ENCODE measurements at regions of chr11 and their contacts with region 1.

Region 1: DNA sequence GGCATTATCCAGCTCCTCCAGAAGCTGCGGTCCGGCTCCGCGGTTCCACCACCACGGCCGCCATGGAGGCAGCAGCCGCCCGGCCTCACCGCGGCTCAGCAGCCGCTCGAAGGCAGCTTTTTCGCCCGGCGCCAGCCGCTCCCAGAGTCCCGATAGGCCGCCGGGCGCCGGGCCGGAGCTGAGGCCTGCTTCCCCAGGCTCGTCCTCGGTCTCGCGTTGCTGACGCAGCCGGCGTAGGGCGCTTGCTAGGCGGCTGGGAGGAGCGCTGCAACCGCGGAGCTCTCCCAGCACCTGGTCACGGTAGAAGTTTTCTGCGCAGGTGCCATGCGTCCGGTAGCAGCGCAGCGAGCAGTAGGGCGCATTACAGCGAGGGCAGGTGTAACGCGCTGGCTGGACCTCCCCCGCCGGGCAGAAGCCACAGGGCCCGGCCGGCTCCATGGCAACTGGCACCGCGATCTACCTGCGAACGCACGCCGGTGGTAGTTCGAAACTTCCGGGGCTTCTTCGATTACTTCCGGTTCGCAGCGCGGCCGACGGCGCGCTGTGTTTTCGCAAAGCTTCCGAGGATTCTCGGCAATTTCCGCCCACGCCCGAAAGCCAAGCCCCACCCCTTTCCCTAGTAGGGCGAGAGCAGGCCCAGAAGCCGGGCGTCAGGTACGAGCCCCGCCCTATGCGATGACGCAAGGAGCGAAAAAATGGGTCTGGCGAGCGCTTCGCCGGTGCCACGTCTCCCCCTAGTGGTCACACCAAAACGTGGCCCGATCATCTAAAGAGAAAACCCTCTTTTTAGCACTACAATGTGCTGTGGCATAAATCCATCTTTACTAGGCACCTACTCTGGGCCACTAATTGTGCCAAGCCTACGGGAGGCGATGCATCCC is at the start of gene ZNHIT2:
- DNase-seq: peak; percentile 99 to 100 (median 99)
- ATAC-seq: peak; percentile 82 to 89 (median 86)
- H3K4me3 ChIP-seq: peak within 1 kb of the TSS; percentile 67 to 99 (median 88)
- H3K27ac ChIP-seq: peak within 1 kb of the TSS; percentile 71 to 93 (median 84)
- H3K4me1 ChIP-seq: peaks cover 0 to 63% (median 40%) of the 10 kb centered on the region in 12 donors
- H3K27me3 ChIP-seq: peaks cover 0 to 5% (median 0%) of the 10 kb centered on the region in 9 donors
- CTCF ChIP-seq: peak; percentile 91 to 99 (median 96)
- POLR2A ChIP-seq: peak in 1 of 2 donors; percentile 55
- total RNA-seq, gene ZNHIT2: 5.5 to 14.3 (median 7.3) TPM

Region 2: DNA sequence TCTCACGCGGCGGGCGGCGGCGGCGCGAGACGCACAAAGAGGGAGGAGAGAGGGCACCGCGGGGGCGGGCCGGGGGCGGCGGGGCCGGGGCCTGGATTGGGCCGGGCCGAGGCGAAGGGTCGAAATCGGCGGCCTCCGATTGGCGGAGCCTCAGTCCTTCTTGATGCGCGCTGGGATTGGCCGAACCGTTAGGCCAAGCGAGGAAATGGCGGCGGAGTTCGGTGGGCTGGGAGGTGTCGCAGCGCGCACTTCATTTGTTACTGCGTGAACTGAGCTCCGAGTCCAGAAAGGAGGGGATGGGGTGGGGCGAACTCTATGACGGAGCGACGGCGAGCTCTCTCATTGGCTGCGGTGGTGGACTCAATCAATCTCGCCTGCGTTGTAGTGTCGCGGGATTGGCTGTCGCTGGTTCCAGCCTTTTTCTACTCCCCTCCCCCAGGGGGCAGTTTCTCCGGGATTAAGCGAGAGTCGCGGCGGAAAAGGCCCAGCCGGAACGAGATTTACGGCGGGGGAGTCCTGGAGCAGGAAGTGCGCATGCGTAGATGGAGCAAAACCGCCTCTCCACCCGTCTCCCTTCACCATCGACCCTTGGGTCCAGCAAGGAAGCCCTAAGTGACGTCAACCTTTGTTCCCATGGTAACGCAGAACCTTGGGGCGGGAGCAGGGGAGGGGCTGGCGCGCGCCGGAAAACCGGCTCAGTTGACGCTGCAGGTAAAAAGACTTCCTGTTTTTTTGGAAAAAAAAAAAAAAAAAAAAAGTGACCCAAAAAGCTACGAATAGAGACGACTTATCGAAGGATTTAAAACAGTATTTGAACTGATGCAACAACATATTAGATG is 338.7 kb before region 1 on chr11 and contains the start of gene SF1:
- intact Hi-C with region 1: loop called in 1 of 10 experiments (anchors 10 kb)
- DNase-seq: peak; percentile 98 to 100 (median 99)
- ATAC-seq: peak; percentile 93 to 97 (median 96)
- H3K4me3 ChIP-seq: peak within 1 kb of the TSS; percentile 77 to 99 (median 92)
- H3K27ac ChIP-seq: peak within 1 kb of the TSS; percentile 98 to 100 (median 99)
- H3K4me1 ChIP-seq: peaks cover 0 to 46% (median 39%) of the 10 kb centered on the region in 12 donors
- H3K27me3 ChIP-seq: no peaks in the 10 kb centered on the region
- CTCF ChIP-seq: peak in 7 of 12 donors; percentile 6 to 53 (median 41)
- POLR2A ChIP-seq: peak; percentile 90 to 97
- total RNA-seq, gene SF1: 103 to 349 (median 157) TPM

Region 3: GRCh38 chr11:64846998-64847666 is 270.3 kb before region 1 on chr11:
- intact Hi-C with region 1: loop called in 4 of 10 experiments (anchors 5 to 10 kb)
- DNase-seq: peak; percentile 90 to 96 (median 91)
- ATAC-seq: peak; percentile 79 to 91 (median 84)
- H3K4me3 ChIP-seq: no peak overlapping the region
- H3K27ac ChIP-seq: peak overlapping the region in 6 of 12 donors; percentile 15 to 89 (median 56)
- H3K4me1 ChIP-seq: peaks cover 7 to 61% (median 52%) of the 10 kb centered on the region in 12 donors
- H3K27me3 ChIP-seq: peaks cover 0 to 4% (median 0%) of the 10 kb centered on the region in 9 donors
- CTCF ChIP-seq: peak; percentile 94 to 99 (median 98)
- POLR2A ChIP-seq: peak in 1 of 2 donors; percentile 18

Region 4: GRCh38 chr11:64924102-64924851 is 193.2 kb before region 1 on chr11 and contains the start of gene PPP2R5B:
- intact Hi-C with region 1: loop called in 2 of 10 experiments (anchors 10 kb)
- DNase-seq: peak; percentile 96 to 97 (median 96)
- ATAC-seq: peak; percentile 96 to 98 (median 98)
- H3K4me3 ChIP-seq: peak within 1 kb of the TSS; percentile 56 to 100 (median 96)
- H3K27ac ChIP-seq: peak within 1 kb of the TSS; percentile 71 to 99 (median 96)
- H3K4me1 ChIP-seq: peaks cover 0 to 39% (median 25%) of the 10 kb centered on the region in 12 donors
- H3K27me3 ChIP-seq: no peaks in the 10 kb centered on the region
- CTCF ChIP-seq: no peak
- POLR2A ChIP-seq: peak in 1 of 2 donors; percentile 87
- total RNA-seq, gene PPP2R5B: 17.5 to 32.5 (median 22.3) TPM

Region 5: DNA sequence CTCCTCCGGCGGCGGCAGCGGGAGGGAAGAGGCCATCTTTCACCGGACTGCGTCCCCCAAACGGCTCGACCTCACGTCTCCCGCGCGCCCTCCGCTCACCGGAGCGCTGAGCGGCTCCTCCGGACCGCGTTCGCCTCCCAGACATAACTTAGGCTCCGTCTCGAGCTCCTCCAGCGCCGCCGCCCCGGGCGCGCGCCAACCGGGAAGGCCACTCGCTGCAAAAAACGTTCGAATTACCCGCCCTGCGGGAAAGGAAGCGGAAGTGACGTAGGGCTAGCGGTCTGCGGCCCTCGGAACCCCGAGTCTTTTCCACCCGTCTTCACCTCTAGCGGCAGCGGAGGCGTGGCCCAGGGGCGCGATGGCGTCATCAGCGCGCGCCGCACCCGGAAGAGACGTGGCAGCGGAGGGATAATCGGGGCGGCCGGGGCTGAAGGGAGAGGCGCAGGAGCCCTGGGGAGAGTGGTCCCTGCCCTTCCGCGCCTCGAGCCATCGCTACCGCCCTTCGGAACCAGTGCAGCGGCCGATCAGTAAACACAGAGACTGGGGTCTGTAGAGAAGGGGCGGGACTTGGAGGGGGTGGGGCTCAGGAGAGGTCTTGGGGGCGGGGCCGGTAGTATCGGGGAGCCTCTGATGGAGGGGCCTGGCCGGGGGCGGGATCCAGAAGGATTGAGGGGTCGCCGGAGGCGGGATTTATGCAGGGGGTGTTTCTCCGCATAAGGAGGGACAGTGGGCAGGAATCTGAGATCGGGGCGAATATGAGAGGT is 33.4 kb before region 1 on chr11 and contains the starts of genes CDCA5 and ZFPL1:
- intact Hi-C with region 1: loop called in 2 of 10 experiments (anchors 1 to 2 kb)
- DNase-seq: peak; percentile 95 to 96 (median 95)
- ATAC-seq: peak; percentile 90 to 98 (median 97)
- H3K4me3 ChIP-seq: peak within 1 kb of the TSS; percentile 44 to 93 (median 79)
- H3K27ac ChIP-seq: peak within 1 kb of the TSS; percentile 45 to 95 (median 90)
- H3K4me1 ChIP-seq: peaks cover 4 to 27% (median 16%) of the 10 kb centered on the region in 12 donors
- H3K27me3 ChIP-seq: no peaks in the 10 kb centered on the region
- CTCF ChIP-seq: no peak
- POLR2A ChIP-seq: peak in 1 of 2 donors; percentile 58
- total RNA-seq, gene CDCA5: 0.42 to 11.6 (median 0.81) TPM
- total RNA-seq, gene ZFPL1: 19.6 to 42.8 (median 25.0) TPM

Region 6: DNA sequence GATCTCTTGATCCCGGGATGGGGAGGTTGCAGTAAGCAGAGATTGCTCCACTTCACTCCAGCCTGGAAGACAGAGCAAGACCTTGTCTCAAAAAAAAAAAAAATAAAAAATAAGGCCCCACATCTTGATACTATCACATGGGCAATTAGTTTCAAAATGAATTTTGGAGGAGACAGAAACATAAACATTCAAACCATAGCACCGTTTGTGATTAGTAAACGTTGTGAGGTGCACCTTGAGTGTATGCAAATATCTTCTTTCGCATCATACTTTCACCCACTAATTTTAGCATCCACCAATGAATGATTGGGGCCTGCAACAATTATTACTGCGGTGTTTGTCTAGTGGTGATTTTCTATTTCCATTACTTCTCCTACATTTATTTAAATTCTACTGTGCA is 41.6 kb after region 1 on chr11:
- intact Hi-C with region 1: no loop called
- DNase-seq: no peak
- ATAC-seq: no peak
- H3K4me3 ChIP-seq: no peak overlapping the region
- H3K27ac ChIP-seq: no peak overlapping the region
- H3K4me1 ChIP-seq: no peaks in the 10 kb centered on the region
- H3K27me3 ChIP-seq: no peaks in the 10 kb centered on the region
- CTCF ChIP-seq: no peak
- POLR2A ChIP-seq: no peak

Region 7: DNA sequence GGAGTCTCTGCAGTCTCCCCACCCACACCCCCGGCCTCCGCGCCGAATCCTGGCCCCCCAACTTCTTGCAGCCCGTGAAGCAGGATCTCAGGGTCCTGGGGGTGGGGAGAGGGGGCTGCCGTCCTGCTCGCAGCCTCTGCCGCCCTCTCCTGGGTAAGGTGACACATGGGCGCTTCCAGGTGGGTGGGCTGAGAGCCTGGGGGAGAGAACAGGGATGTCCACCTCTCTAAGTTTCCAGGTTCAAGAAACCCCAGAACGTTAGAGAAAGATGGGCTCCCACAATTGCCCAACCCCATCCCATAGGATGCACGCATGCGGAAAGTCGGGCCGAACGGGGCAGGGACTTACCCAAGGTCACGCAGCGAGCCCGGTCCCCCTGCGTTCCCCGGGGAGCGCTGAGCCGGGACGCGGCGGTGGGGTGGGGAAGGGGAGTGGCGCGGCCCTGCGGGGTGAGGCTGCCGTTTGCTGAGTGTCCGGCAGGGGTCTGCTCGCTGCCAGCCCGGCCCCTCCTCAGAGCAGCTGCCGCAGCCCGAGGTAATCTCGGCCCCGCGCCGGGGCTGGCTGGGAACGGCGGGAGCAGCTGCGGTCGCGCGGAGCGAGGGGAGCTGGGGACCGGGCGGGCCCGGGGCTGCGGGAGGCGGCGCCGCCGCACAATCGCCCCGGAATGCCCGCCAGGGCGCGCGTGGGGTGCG is 63.6 kb after region 1 on chr11:
- intact Hi-C with region 1: loop called in 5 of 10 experiments (anchors 5 to 10 kb)
- DNase-seq: peak; percentile 51 to 84 (median 64)
- ATAC-seq: peak; percentile 21 to 68 (median 56)
- H3K4me3 ChIP-seq: peak overlapping the region; percentile 65 to 98 (median 80)
- H3K27ac ChIP-seq: peak overlapping the region; percentile 73 to 98 (median 93)
- H3K4me1 ChIP-seq: peaks cover 0 to 30% (median 12%) of the 10 kb centered on the region in 12 donors
- H3K27me3 ChIP-seq: no peaks in the 10 kb centered on the region
- CTCF ChIP-seq: peak; percentile 27 to 58 (median 45)
- POLR2A ChIP-seq: peak in 1 of 2 donors; percentile 64

Measured in heart left ventricle (tissue), 16 donors.